SK-N-SH (cell line): ENCODE measurements at regions of chr3 and their contacts with region 1.

Region 1: DNA sequence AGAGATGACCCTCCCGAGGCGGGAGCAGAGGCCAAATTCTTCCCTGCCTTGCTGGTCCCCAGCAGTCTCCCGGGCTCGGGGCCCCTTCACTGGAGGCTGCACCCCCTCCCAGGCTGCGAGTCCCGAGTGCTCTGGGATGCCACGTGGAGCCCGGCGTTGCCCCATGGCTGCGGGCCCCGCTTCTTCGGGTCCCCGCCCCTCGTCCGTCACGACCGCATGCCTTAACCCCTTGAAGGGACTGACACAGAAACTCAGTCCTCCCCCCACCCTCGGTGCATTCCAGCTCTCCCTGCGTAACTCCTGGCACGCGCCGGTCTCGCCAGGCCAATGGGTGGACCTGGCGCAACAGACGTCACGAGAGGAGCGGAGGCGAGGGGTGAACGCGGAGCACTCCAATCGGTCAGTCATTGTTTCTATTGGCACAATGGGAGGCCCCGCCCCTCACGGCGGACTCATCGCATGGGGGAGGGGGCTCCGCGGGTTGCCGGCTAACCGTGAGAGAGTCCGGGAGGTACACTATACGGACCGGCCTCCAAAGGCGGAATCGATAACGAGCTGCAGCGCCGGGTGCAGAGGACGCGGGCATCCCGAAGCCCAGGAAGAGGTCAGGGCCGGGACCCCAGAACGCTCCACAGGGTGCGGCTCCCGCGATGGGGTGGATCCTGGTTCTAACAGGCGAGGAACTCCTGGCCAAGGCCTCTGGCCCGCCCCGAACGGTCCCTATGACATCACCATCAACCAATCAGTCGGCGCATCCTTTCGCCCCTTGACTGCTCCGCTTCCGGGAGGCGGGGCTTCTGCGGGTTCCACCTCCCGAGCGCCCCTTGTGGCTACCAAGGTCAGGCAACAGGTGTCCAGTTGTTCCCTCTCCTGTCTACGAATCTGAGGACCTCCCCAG is 978 bp upstream of the CELSR3 start:
- DNase-seq: peak; percentile 96
- H3K4me3 ChIP-seq: peak overlapping the region; percentile 61 to 77
- H3K27ac ChIP-seq: peak overlapping the region; percentile 96 to 99
- H3K4me1 ChIP-seq: peaks cover 4 to 18% of the 10 kb centered on the region in 2 experiments; a peak in 2 of 4 replicates
- H3K27me3 ChIP-seq: no peaks in the 10 kb centered on the region
- CTCF ChIP-seq: peak; percentile 86
- EP300 ChIP-seq: no peak
- RAD21 ChIP-seq: no peak

Region 2: DNA sequence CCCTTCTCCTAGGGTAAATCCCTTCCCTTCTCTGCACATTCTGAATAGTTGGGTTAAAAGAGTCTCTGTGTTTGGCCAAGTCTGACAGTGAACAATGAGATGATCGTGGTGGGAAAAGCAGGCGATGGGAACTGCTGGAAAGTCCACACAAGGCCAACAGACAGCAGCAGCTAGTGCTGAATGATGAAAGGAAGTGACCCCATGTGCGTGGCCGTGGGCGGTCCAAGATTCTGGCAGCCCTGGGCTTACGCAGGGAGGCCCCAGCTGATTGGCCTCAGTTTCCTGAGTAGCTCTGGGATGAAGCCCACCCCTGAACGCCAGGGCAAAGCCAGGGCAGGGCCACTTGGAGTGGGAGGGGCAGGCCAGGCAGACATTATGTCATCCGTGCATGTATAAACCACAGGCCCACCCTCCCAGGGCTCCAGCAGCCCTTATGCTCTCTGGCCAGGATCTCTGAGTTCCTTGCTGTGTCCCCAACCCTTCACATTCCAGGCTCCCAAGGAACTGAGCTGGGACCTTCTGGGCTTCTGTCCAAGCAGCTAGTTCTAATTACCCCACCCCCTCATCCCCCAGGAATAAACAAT is 533.3 kb before region 1 on chr3:
- CTCF ChIA-PET with region 1: no interaction called
- POLR2A ChIA-PET with region 1: no interaction called
- DNase-seq: no peak
- H3K4me3 ChIP-seq: no peak overlapping the region
- H3K27ac ChIP-seq: no peak overlapping the region
- H3K4me1 ChIP-seq: peaks cover 0 to 3% of the 10 kb centered on the region in 2 experiments; a peak in 1 of 4 replicates
- H3K27me3 ChIP-seq: no peaks in the 10 kb centered on the region
- CTCF ChIP-seq: no peak
- EP300 ChIP-seq: no peak
- RAD21 ChIP-seq: no peak

Region 3: DNA sequence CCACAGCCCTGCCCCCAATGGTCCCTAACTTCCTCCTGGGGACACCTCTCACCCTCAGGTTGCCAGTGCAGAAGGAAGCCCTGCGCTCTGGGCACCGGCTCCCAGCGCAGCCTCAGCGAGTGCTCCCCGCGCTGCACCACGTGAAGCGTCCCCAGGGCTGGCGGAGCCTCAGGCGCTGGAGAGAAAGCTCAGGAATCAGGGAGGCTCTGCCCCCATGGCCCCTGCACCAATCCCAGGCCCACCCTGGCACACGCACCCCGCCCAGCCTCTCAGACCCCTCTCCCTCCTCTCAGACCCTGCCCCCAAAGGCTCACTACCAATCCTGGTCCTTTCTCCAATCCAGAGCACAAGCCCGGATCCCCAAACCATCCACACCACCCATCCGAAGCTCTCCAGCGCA is 75.4 kb before region 1 on chr3:
- CTCF ChIA-PET with region 1: no interaction called
- POLR2A ChIA-PET with region 1: no interaction called
- DNase-seq: no peak
- H3K4me3 ChIP-seq: no peak overlapping the region
- H3K27ac ChIP-seq: no peak overlapping the region
- H3K4me1 ChIP-seq: no peaks in the 10 kb centered on the region
- H3K27me3 ChIP-seq: no peaks in the 10 kb centered on the region
- CTCF ChIP-seq: no peak
- EP300 ChIP-seq: no peak
- RAD21 ChIP-seq: no peak

Region 4: GRCh38 chr3:48674505-48674904 is 10.8 kb after region 1 on chr3:
- CTCF ChIA-PET with region 1: interaction called, 24 read pairs
- POLR2A ChIA-PET with region 1: interaction called, 10 read pairs
- DNase-seq: no peak
- H3K4me3 ChIP-seq: no peak overlapping the region
- H3K27ac ChIP-seq: no peak overlapping the region
- H3K4me1 ChIP-seq: no peaks in the 10 kb centered on the region
- H3K27me3 ChIP-seq: no peaks in the 10 kb centered on the region
- CTCF ChIP-seq: no peak
- EP300 ChIP-seq: no peak
- RAD21 ChIP-seq: no peak

Region 5: GRCh38 chr3:48685602-48686511 is 22.2 kb after region 1 on chr3 and contains the start of gene NCKIPSD:
- CTCF ChIA-PET with region 1: interaction called, 28 read pairs
- POLR2A ChIA-PET with region 1: interaction called, 6 read pairs
- DNase-seq: peak; percentile 98
- H3K4me3 ChIP-seq: peak within 1 kb of the TSS; percentile 85 to 96
- H3K27ac ChIP-seq: peak within 1 kb of the TSS; percentile 22 to 85
- H3K4me1 ChIP-seq: peaks cover 20 to 47% of the 10 kb centered on the region in 2 experiments
- H3K27me3 ChIP-seq: no peaks in the 10 kb centered on the region
- CTCF ChIP-seq: peak; percentile 73
- EP300 ChIP-seq: no peak
- RAD21 ChIP-seq: peak; percentile 61
- polyA plus RNA-seq, gene NCKIPSD: 20.4 and 24.9 TPM in 2 replicates